ENCODE measurements at regions of chr3 and their contacts with region 1.

Region 1: GRCh38 chr3:160343132-160343531 is 55.9 kb downstream of the IFT80 start:
- DNase-seq: peak; percentile 36
- H3K4me3 Mint-ChIP-seq: no peak overlapping the region
- H3K27ac Mint-ChIP-seq: no peak overlapping the region
- H3K4me1 Mint-ChIP-seq: no peaks in the 10 kb centered on the region
- H3K27me3 Mint-ChIP-seq: no peaks in the 10 kb centered on the region
- CTCF ChIP-seq: peak; percentile 47

Region 2: DNA sequence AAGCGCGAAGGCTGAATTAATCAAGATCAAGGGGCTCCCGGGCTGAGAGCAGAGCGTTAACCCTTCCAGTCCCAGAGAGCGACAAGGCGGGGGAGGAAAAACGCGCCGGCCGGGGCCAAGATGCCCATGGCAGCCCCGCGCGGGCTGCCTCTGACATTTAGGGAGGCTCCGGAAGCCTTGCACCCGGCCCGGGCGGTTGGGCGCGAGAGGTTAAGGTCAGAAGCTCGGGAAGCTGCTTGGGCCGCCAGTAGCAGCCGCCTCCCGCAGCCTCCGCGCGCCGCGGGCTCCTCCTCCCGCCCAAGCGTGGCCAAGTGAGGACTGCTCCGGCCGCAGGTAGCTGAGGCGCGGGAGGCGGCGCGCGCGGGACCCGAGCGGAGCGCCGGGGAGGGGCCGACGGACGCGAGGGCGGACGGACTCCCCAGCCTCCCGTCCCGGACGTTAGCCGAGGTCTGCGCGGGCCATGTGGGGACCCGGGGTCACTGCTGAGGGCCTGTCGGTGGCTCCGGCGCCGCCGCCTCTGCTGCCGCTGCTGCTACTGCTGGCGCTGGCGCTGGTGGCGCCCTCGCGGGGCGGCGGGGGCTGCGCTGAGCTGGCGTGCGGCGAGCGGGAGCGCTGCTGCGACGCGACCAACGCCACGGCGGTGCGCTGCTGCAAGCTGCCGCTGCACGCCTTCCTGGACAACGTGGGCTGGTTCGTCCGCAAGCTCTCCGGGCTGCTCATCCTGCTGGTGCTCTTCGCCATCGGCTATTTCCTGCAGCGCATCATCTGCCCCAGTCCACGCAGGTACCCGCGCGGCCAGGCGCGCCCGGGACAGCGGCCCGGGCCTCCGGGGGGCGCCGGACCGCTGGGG is 117.7 kb before region 1 on chr3 and contains the start of gene C3orf80:
- CTCF ChIA-PET with region 1: interaction called, 3 read pairs
- POLR2A ChIA-PET with region 1: no interaction called
- intact Hi-C with region 1: loop called (anchors 2 kb)
- DNase-seq: peak; percentile 56
- H3K4me3 Mint-ChIP-seq: peak within 1 kb of the TSS; percentile 65
- H3K27ac Mint-ChIP-seq: no peak within 1 kb of the TSS
- H3K4me1 Mint-ChIP-seq: no peaks in the 10 kb centered on the region
- H3K27me3 Mint-ChIP-seq: no peaks in the 10 kb centered on the region
- CTCF ChIP-seq: no peak
- total RNA-seq, gene C3orf80: 0.28 and 0.29 TPM in 2 replicates

Region 3: GRCh38 chr3:160265073-160265472 is 78.1 kb before region 1 on chr3:
- CTCF ChIA-PET with region 1: no interaction called
- POLR2A ChIA-PET with region 1: no interaction called
- intact Hi-C with region 1: no loop called
- DNase-seq: no peak
- H3K4me3 Mint-ChIP-seq: no peak overlapping the region
- H3K27ac Mint-ChIP-seq: no peak overlapping the region
- H3K4me1 Mint-ChIP-seq: peaks cover 7% of the 10 kb centered on the region
- H3K27me3 Mint-ChIP-seq: no peaks in the 10 kb centered on the region
- CTCF ChIP-seq: no peak

Region 4: DNA sequence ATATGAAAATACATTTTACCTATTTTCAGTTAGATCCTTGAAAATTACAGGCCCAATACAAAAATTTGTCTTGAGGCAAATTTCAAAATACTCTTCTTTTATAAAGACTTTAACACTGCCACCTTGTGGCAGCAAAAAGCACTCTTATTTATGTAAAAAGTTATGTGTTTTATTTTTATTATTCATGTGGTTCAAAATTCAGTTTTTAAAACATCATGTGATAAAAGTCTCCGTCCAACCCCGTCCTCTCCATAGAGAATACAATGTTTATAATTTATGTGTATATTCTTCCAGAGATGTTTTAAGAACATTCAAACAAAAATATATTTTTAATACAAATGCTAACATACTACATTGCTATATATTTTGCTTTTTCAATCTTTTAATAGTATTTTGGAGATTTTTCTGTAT is 143.3 kb after region 1 on chr3:
- CTCF ChIA-PET with region 1: no interaction called
- POLR2A ChIA-PET with region 1: no interaction called
- intact Hi-C with region 1: loop called (anchors 5 kb)
- DNase-seq: peak; percentile 53
- H3K4me3 Mint-ChIP-seq: no peak overlapping the region
- H3K27ac Mint-ChIP-seq: no peak overlapping the region
- H3K4me1 Mint-ChIP-seq: no peaks in the 10 kb centered on the region
- H3K27me3 Mint-ChIP-seq: no peaks in the 10 kb centered on the region
- CTCF ChIP-seq: peak; percentile 61

Region 5: GRCh38 chr3:160796813-160797164 is 453.7 kb after region 1 on chr3:
- CTCF ChIA-PET with region 1: no interaction called
- POLR2A ChIA-PET with region 1: no interaction called
- intact Hi-C with region 1: no loop called
- DNase-seq: peak; percentile 25
- H3K4me3 Mint-ChIP-seq: no peak overlapping the region
- H3K27ac Mint-ChIP-seq: peak overlapping the region; percentile 68
- H3K4me1 Mint-ChIP-seq: peaks cover 14% of the 10 kb centered on the region
- H3K27me3 Mint-ChIP-seq: no peaks in the 10 kb centered on the region
- CTCF ChIP-seq: no peak

Measured in MCF 10A (cell line).